Psoas muscle (tissue), 8 donors: ENCODE measurements at regions of chr17 and their contacts with region 1.

Region 1: GRCh38 chr17:76388966-76389888 is 4.8 kb downstream of the SPHK1 start:
- DNase-seq: no peak
- ATAC-seq: no peak
- H3K4me3 ChIP-seq: no peak overlapping the region
- H3K27ac ChIP-seq: no peak overlapping the region
- H3K4me1 ChIP-seq: peaks cover 15% of the 10 kb centered on the region
- H3K27me3 ChIP-seq: no peaks in the 10 kb centered on the region
- CTCF ChIP-seq: no peak

Region 2: GRCh38 chr17:76111956-76112355 is 277.3 kb before region 1 on chr17:
- intact Hi-C with region 1: loop called in 1 of 2 experiments (anchors 1 kb)
- DNase-seq: no peak
- ATAC-seq: no peak
- H3K4me3 ChIP-seq: no peak overlapping the region
- H3K27ac ChIP-seq: no peak overlapping the region
- H3K4me1 ChIP-seq: no peaks in the 10 kb centered on the region
- H3K27me3 ChIP-seq: no peaks in the 10 kb centered on the region
- CTCF ChIP-seq: no peak

Region 3: DNA sequence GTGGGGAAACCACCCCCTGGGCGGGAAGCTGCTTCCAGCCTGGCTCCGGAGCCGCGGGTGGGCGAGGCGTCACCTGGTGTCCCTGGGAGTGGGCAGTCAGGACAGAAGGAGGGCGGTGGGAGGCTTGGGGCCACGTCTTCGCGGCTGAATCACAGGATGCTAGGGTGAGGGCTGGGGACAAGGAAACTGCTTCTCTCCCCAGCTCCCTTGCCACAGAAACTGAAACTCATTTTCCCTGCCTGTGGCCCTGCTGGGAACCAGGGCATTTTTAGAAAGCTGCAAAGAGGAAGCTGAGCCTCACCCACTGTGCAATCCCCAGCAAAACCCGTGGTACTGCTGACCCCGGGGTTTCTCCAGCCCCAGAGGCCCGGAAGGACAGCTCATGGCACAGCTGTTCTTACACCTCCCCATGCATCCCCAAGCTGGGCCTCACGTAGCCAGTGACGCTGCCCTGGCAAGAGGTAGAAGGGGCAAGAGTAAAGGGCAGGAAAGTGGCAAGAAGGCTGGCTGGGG is 103.8 kb after region 1 on chr17:
- intact Hi-C with region 1: no loop called
- DNase-seq: peak; percentile 71 to 78
- ATAC-seq: peak; percentile 42 to 68 (median 62)
- H3K4me3 ChIP-seq: no peak overlapping the region
- H3K27ac ChIP-seq: peak overlapping the region; percentile 57
- H3K4me1 ChIP-seq: peaks cover 39% of the 10 kb centered on the region
- H3K27me3 ChIP-seq: no peaks in the 10 kb centered on the region
- CTCF ChIP-seq: no peak